B cell (primary cell): ENCODE measurements at regions of chrX and their contacts with region 1.

Region 1: GRCh38 chrX:24204331-24204730 is 54.8 kb downstream of the ZFX start:
- DNase-seq: no peak
- ATAC-seq: no peak
- H3K4me3 ChIP-seq: no peak overlapping the region
- H3K4me3 Mint-ChIP-seq: no peak overlapping the region
- H3K27ac ChIP-seq: peak overlapping the region in 1 of 2 donors; percentile 70
- H3K27ac Mint-ChIP-seq: no peak overlapping the region
- H3K4me1 ChIP-seq: peaks cover 10 to 14% of the 10 kb centered on the region in 2 donors
- H3K4me1 Mint-ChIP-seq: peaks cover 39% of the 10 kb centered on the region
- H3K27me3 ChIP-seq: no peaks in the 10 kb centered on the region
- H3K27me3 Mint-ChIP-seq: no peaks in the 10 kb centered on the region
- CTCF ChIP-seq: no peak

Region 2: DNA sequence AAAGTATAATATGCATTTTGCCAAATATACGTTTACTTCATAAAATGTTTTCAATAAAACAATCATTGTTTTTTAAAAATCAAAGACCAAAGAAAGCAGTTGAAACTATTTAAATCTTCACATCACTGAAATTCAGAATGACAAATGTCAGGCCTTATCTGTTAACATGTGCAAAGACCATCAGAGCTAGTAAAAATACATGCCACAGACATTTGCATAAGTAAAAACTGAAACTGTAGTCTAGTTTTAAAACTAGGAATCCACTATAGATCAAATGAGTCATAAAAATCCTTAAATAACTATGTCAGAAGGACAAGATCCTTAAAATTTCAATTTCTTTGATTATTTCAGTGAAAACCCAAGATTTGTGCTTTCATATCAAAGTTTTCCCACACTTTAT is 202.2 kb before region 1 on chrX:
- CTCF ChIA-PET with region 1: no interaction called
- POLR2A ChIA-PET with region 1: no interaction called
- intact Hi-C with region 1: no loop called
- DNase-seq: no peak
- ATAC-seq: no peak
- H3K4me3 ChIP-seq: no peak overlapping the region
- H3K4me3 Mint-ChIP-seq: no peak overlapping the region
- H3K27ac ChIP-seq: no peak overlapping the region
- H3K27ac Mint-ChIP-seq: no peak overlapping the region
- H3K4me1 ChIP-seq: no peaks in the 10 kb centered on the region
- H3K4me1 Mint-ChIP-seq: peaks cover 14% of the 10 kb centered on the region
- H3K27me3 ChIP-seq: no peaks in the 10 kb centered on the region
- H3K27me3 Mint-ChIP-seq: no peaks in the 10 kb centered on the region
- CTCF ChIP-seq: no peak

Region 3: GRCh38 chrX:24169211-24169610 is 35.1 kb before region 1 on chrX:
- CTCF ChIA-PET with region 1: no interaction called
- POLR2A ChIA-PET with region 1: no interaction called
- intact Hi-C with region 1: loop called (anchors 5 kb)
- DNase-seq: peak; percentile 53
- ATAC-seq: peak; percentile 78
- H3K4me3 ChIP-seq: peak overlapping the region in 1 of 5 experiments; percentile 3
- H3K4me3 Mint-ChIP-seq: peak overlapping the region; percentile 81
- H3K27ac ChIP-seq: peak overlapping the region; percentile 44 to 70
- H3K27ac Mint-ChIP-seq: peak overlapping the region; percentile 81
- H3K4me1 ChIP-seq: peaks cover 31 to 40% of the 10 kb centered on the region in 2 donors
- H3K4me1 Mint-ChIP-seq: peaks cover 38% of the 10 kb centered on the region
- H3K27me3 ChIP-seq: no peaks in the 10 kb centered on the region
- H3K27me3 Mint-ChIP-seq: no peaks in the 10 kb centered on the region
- CTCF ChIP-seq: no peak